Calu3 (cell line): ENCODE measurements at regions of chr16 and their contacts with region 1.

Region 1: GRCh38 chr16:56866943-56867830 is 2.2 kb downstream of the SLC12A3 start:
- DNase-seq: peak; percentile 48
- H3K4me3 Mint-ChIP-seq: no peak overlapping the region
- H3K27ac Mint-ChIP-seq: no peak overlapping the region
- H3K4me1 Mint-ChIP-seq: no peaks in the 10 kb centered on the region
- H3K27me3 Mint-ChIP-seq: no peaks in the 10 kb centered on the region
- CTCF ChIP-seq: peak; percentile 66

Region 2: GRCh38 chr16:56824331-56824730 is 42.9 kb before region 1 on chr16:
- CTCF ChIA-PET with region 1: no interaction called
- intact Hi-C with region 1: no loop called
- DNase-seq: no peak
- H3K4me3 Mint-ChIP-seq: no peak overlapping the region
- H3K27ac Mint-ChIP-seq: no peak overlapping the region
- H3K4me1 Mint-ChIP-seq: no peaks in the 10 kb centered on the region
- H3K27me3 Mint-ChIP-seq: no peaks in the 10 kb centered on the region
- CTCF ChIP-seq: no peak

Region 3: DNA sequence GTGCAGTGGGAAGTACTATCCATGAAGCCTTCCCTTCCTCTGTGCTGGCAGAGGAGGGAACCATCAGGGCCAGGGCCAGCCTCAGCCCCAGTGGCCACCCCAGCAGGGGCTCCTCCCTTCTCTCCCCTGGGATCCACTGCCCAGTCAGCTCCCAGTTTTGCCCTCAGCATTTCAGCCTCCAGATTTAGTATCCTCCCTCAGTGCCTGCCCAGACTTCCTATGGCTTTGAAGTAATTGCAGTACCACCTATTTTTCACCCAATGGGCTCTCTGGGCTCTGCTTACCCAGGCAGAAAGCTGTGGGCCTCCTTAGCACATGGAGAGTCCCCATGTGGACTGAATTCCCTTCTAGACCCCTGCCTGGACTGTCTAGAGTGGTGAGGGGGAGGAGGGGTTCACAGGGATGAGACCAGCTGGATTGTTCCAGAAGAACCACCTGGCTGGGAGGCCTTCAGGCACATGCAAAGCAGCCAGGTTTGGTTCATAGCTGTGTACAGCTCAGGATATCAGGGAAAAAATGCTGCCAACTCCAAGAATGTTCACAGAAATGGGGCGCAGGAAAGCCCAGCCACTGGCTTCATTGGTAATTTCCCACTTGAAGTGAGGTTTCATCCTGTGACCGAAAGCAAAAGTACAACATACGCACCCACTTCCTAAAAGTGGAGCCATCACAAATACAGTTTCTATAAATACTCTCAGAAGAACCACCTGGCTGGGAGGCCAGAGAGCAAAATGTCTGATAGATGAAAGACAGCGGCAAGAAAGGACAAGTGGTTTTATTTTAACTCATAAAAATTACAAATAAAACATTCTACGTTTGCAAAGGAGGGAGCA is 49.6 kb after region 1 on chr16:
- CTCF ChIA-PET with region 1: no interaction called
- intact Hi-C with region 1: no loop called
- DNase-seq: no peak
- H3K4me3 Mint-ChIP-seq: no peak overlapping the region
- H3K27ac Mint-ChIP-seq: no peak overlapping the region
- H3K4me1 Mint-ChIP-seq: peaks cover 17% of the 10 kb centered on the region
- H3K27me3 Mint-ChIP-seq: peaks cover 94% of the 10 kb centered on the region
- CTCF ChIP-seq: no peak

Region 4: DNA sequence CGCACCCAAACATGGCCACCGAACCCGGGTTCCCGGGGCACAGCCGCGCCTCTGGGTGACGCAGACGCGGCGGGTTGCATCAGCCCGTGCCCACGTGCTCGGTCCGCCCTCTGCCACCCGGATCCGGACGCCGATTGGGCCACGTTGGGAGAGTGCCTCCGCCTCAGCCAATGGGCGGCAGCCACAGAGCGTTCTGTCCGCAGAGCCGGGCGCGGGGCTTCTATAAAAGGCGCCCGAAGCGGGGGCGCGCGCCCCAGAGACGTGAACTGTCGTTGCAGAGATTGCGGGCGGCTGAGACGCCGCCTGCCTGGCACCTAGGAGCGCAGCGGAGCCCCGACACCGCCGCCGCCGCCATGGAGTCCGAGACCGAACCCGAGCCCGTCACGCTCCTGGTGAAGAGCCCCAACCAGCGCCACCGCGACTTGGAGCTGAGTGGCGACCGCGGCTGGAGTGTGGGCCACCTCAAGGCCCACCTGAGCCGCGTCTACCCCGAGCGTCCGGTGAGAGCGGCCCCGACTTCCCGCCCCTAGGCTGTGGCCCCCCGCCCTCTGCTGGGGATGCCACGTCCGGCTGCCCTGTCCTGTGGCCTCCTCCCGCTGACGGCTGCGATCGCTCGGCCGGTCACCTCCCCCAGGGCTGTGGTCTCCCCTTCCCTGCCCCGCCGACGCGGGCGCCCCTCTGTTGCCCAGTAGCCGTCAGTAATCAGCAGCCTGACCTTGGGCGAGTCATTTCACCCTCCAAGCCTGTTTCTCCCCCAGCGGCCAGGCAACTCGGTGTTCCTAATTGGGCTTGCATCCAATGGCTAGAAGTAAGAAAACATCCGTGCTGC is 64.9 kb after region 1 on chr16 and contains the start of gene HERPUD1:
- CTCF ChIA-PET with region 1: no interaction called
- intact Hi-C with region 1: loop called (anchors 10 kb)
- DNase-seq: peak; percentile 99
- H3K4me3 Mint-ChIP-seq: peak within 1 kb of the TSS; percentile 96
- H3K27ac Mint-ChIP-seq: peak within 1 kb of the TSS; percentile 100
- H3K4me1 Mint-ChIP-seq: peaks cover 12% of the 10 kb centered on the region
- H3K27me3 Mint-ChIP-seq: peaks cover 13% of the 10 kb centered on the region
- CTCF ChIP-seq: peak; percentile 20
- total RNA-seq, gene HERPUD1: 111 and 116 TPM in 2 replicates

Region 5: DNA sequence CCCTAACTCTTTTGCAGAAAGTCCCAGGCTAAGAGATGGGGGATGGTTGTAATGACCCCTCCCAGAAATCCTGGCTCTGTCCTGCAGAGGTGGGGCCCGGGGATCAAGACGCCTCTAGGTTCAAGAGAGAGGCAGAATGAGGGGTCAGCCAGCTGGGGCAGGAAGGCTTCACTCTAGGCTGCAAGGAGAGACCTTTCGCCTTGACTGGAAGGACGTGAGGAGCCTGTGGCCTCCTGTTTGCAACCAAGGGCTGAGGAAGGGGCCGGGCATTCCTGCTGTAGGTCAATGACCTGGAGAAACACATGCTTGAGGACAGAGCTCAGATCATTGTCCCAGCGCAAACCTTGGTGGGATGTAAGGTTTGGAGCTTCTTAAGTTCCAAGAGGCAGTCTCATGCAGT is 85.8 kb after region 1 on chr16:
- CTCF ChIA-PET with region 1: no interaction called
- intact Hi-C with region 1: loop called (anchors 2 kb)
- DNase-seq: no peak
- H3K4me3 Mint-ChIP-seq: no peak overlapping the region
- H3K27ac Mint-ChIP-seq: no peak overlapping the region
- H3K4me1 Mint-ChIP-seq: no peaks in the 10 kb centered on the region
- H3K27me3 Mint-ChIP-seq: no peaks in the 10 kb centered on the region
- CTCF ChIP-seq: no peak

Region 6: GRCh38 chr16:57167953-57168352 is 300.8 kb after region 1 on chr16:
- CTCF ChIA-PET with region 1: no interaction called
- intact Hi-C with region 1: loop called (anchors 5 kb)
- DNase-seq: no peak
- H3K4me3 Mint-ChIP-seq: no peak overlapping the region
- H3K27ac Mint-ChIP-seq: no peak overlapping the region
- H3K4me1 Mint-ChIP-seq: peaks cover 12% of the 10 kb centered on the region
- H3K27me3 Mint-ChIP-seq: no peaks in the 10 kb centered on the region
- CTCF ChIP-seq: peak; percentile 22